Activated CD8-positive, alpha-beta T cell treated with anti-CD3 and anti-CD28 coated beads, Interleukin-2, amount 10 ng/mL, durations not matched to agents 7 days and 5 days (primary cell): ENCODE measurements at regions of chr18 and their contacts with region 1.

Region 1: DNA sequence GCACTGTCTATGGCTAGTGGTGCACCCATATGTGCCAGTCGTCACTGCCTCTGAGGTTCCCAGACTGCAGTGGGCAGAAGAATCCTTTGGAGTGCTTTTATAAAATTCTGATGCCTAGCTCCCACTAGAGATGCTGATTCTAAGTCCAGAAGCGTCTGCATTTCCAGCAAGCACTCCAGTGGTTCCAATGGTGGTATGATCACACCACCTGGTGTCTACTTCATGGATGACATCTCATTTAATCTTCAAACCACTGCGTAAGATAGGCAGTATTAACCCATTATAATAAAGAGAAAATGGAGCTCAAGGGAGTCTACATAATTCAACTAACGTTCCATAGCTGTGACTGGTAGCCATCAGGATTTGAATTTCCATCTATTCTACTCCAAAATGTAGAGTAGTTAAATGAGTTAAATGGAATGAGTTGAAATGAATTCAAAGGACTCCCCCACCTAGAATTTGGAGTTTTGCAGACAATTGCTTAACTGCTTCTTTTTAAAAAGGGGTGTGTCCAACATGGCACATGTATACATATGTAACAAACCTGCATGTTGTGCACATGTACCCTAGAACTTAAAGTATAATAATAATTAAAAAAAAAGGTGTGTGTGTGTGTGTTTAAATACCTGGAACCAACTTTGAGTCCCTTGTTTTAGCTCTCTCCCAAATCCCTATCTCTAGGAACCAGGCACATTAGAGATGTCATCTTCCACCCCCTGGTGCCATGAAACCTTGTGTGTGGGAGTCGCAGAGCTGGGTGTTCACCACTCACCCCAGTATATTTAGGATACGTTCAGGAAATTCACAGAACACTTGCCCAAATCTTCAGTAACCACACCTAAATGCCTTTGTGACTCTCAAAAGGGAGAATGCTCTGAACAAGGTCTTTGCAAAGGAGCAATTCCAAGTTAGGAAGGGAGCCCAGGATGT is 14.1 kb downstream of the LAMA3 start:
- DNase-seq: peak; percentile 40
- ATAC-seq: peak; percentile 75
- H3K4me3 Mint-ChIP-seq: no peak overlapping the region
- H3K27ac Mint-ChIP-seq: no peak overlapping the region
- H3K4me1 Mint-ChIP-seq: peaks cover 10% of the 10 kb centered on the region
- H3K27me3 Mint-ChIP-seq: peaks cover 33% of the 10 kb centered on the region

Region 2: DNA sequence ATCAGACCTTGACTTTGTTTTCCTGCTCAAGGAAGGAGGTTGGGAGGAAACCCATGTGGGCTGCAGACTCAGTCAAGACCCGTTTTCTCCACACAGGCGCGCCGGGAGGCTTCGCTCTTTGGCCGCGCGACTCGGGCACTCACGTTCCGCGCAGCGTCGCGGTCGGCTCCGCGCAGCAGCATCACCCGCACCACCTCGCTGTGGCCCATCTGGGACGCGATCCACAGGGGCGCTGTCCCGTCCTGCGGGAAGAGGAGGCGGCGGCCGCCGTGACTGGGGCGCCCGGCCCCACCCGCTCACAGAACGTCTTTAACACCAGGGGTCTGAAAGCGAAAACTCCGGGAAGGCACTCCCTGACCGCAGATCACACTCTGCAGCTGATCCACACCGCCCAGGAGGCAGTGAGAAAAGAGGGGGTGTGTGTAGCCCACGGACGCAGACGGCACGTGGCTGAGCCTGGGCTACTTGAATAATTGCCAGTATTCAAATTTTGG is 83.9 kb before region 1 on chr18:
- CTCF ChIA-PET with region 1: interaction called, 36 read pairs
- POLR2A ChIA-PET with region 1: no interaction called
- DNase-seq: no peak
- ATAC-seq: peak; percentile 63
- H3K4me3 Mint-ChIP-seq: peak overlapping the region; percentile 38
- H3K27ac Mint-ChIP-seq: no peak overlapping the region
- H3K4me1 Mint-ChIP-seq: peaks cover 10% of the 10 kb centered on the region
- H3K27me3 Mint-ChIP-seq: peaks cover 52% of the 10 kb centered on the region

Region 3: GRCh38 chr18:23629444-23629946 is 73.8 kb before region 1 on chr18:
- CTCF ChIA-PET with region 1: interaction called, 36 read pairs
- POLR2A ChIA-PET with region 1: no interaction called
- DNase-seq: no peak
- ATAC-seq: peak; percentile 30
- H3K4me3 Mint-ChIP-seq: no peak overlapping the region
- H3K27ac Mint-ChIP-seq: no peak overlapping the region
- H3K4me1 Mint-ChIP-seq: peaks cover 6% of the 10 kb centered on the region
- H3K27me3 Mint-ChIP-seq: peaks cover 18% of the 10 kb centered on the region

Region 4: GRCh38 chr18:23812546-23813440 is 109.5 kb after region 1 on chr18:
- CTCF ChIA-PET with region 1: interaction called, 10 read pairs
- POLR2A ChIA-PET with region 1: no interaction called
- DNase-seq: no peak
- ATAC-seq: no peak
- H3K4me3 Mint-ChIP-seq: no peak overlapping the region
- H3K27ac Mint-ChIP-seq: no peak overlapping the region
- H3K4me1 Mint-ChIP-seq: peaks cover 34% of the 10 kb centered on the region
- H3K27me3 Mint-ChIP-seq: peaks cover 20% of the 10 kb centered on the region